ENCODE measurements at regions of chr7 and their contacts with region 1.

Region 1: DNA sequence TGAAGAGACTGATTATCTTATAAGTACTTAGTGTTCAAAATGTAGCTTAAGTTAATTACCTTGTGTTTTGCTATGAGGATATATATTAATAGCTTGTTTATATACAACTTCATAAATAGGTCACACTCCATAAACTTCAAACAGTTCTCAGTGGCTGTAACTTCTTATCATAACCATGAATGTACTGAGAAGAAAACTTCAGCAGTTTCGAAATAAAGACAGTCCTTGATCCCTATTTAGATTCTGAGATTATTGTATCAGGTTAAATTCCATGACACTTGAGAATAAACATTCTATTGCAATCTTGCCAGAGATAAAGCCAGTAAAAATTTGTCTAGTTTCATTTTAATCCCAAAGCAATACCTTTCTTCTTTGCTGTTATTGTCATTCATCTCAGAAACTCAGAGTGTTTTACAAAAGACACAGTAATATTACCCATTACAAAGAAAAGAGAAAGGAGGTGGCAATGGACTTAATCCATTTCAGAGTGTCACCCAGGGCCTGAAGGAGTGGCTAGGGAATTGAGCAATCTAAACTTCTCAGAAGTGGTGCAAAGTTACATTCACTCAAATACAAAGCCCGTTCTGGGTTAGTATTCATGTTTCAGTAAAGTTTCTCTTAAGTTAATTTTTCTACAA is 403.6 kb downstream of the SEMA3D start:
- DNase-seq: peak in 2 of 4 experiments; percentile 24 to 28
- ATAC-seq: peak; percentile 52
- H3K4me3 ChIP-seq: no peak overlapping the region
- H3K27ac ChIP-seq: peak overlapping the region; percentile 43; the same call in 1 of the 3 replicates
- H3K4me1 ChIP-seq: peaks cover 13 to 17% of the 10 kb centered on the region in 2 experiments; a peak in 4 of 5 replicates
- H3K27me3 ChIP-seq: no peaks in the 10 kb centered on the region
- CTCF ChIP-seq: no peak
- EP300 ChIP-seq: no peak
- POLR2A ChIP-seq: no peak
- RAD21 ChIP-seq: no peak

Region 2: DNA sequence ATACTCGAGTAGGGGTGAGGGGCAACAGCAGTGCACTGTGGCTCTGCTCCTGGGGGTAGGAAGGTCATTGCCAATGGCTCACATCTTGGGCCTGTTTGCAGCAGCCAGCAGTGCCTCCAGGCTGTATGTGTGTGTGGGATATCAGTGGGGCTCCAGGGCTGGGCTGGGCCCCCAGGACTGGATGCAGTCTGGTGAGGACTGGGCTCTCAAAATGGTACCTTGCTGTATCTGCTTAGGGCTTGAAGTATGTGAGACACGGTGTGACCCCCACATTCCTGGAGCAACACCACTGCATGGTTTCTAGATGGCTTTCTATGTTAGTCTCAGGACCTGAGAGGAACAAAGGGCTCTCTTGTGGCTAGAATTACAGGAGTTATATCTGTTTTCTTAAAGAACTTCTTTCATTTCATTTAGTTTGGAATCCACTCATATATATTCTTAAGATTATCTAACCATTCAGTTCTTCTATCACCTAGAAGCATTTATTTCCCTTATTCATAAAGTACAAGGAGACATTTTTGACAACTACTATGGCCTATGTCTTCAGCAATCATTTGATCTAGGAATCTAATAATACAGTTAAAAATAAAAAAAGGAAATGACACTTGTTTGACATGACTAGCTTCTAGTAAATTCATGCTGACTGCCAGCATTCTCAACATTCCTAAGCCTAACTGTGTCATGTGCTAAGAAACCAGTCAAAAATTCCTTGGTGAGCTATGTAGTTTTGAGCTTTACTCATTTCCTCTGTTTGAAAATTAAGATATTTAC is 145.5 kb before region 1 on chr7:
- CTCF ChIA-PET with region 1: no interaction called
- POLR2A ChIA-PET with region 1: no interaction called
- in situ Hi-C with region 1: no loop called
- intact Hi-C with region 1: no loop called
- DNase-seq: no peak
- ATAC-seq: no peak
- H3K4me3 ChIP-seq: no peak overlapping the region
- H3K27ac ChIP-seq: no peak overlapping the region
- H3K4me1 ChIP-seq: no peaks in the 10 kb centered on the region
- H3K27me3 ChIP-seq: no peaks in the 10 kb centered on the region
- CTCF ChIP-seq: no peak
- EP300 ChIP-seq: no peak
- POLR2A ChIP-seq: no peak
- RAD21 ChIP-seq: no peak

Region 3: DNA sequence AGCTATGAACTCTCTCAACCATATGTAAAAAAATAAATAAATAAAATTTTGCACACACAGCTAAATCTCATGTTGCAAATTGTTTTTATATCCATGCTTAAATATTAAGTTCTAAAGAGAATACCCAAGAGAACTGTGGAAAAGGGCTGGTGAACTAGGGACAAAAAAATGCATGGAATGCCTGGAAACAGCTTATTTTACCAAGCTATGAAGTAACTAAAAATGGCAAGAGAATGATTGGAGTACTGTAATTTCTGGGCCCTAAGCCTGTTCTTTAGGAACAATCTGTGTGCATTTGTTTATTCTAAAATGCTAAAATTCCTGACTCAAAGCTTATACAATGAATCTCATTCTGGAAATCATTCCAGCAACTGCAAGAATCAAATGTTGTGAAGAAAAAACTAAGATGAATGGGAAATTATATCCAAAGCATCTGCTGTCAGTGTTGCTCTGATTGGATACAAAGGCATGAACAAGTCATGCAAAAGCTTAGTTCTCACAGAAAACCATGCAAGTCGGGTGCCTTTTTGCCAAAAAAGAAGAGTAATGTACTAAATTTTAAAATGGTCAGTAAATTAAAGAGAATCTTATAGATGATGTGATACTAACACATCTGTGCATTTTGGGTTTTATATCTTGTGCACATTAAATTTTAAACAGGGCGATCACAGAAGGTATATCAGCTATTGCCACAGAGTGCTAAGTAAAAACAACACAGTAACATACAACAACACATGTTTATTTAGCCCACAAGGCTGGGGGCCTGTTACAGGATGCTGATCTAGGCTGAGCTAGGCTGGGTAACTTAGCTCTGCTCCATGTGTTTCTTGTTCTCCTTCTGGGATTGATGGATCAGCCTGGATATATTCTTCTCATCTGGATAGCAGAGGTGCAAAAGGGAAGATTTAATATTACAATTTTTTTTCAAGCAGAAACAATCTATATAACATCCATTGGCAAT is 135.2 kb before region 1 on chr7:
- CTCF ChIA-PET with region 1: no interaction called
- POLR2A ChIA-PET with region 1: no interaction called
- in situ Hi-C with region 1: no loop called
- intact Hi-C with region 1: no loop called
- DNase-seq: no peak
- ATAC-seq: no peak
- H3K4me3 ChIP-seq: no peak overlapping the region
- H3K27ac ChIP-seq: no peak overlapping the region
- H3K4me1 ChIP-seq: no peaks in the 10 kb centered on the region
- H3K27me3 ChIP-seq: no peaks in the 10 kb centered on the region
- CTCF ChIP-seq: no peak
- EP300 ChIP-seq: no peak
- POLR2A ChIP-seq: no peak
- RAD21 ChIP-seq: no peak

Region 4: GRCh38 chr7:84697506-84697905 is 85.8 kb before region 1 on chr7:
- CTCF ChIA-PET with region 1: no interaction called
- POLR2A ChIA-PET with region 1: no interaction called
- in situ Hi-C with region 1: no loop called
- intact Hi-C with region 1: no loop called
- DNase-seq: no peak
- ATAC-seq: no peak
- H3K4me3 ChIP-seq: no peak overlapping the region
- H3K27ac ChIP-seq: no peak overlapping the region
- H3K4me1 ChIP-seq: no peaks in the 10 kb centered on the region; a peak in 1 of 5 replicates
- H3K27me3 ChIP-seq: no peaks in the 10 kb centered on the region
- CTCF ChIP-seq: no peak
- EP300 ChIP-seq: no peak
- POLR2A ChIP-seq: no peak
- RAD21 ChIP-seq: no peak

Region 5: GRCh38 chr7:84714765-84715164 is 68.5 kb before region 1 on chr7:
- CTCF ChIA-PET with region 1: no interaction called
- POLR2A ChIA-PET with region 1: no interaction called
- in situ Hi-C with region 1: no loop called
- intact Hi-C with region 1: loop called (anchors 5 kb)
- DNase-seq: peak in 1 of 4 experiments; percentile 11
- ATAC-seq: peak; percentile 61
- H3K4me3 ChIP-seq: no peak overlapping the region
- H3K27ac ChIP-seq: no peak overlapping the region
- H3K4me1 ChIP-seq: no peaks in the 10 kb centered on the region
- H3K27me3 ChIP-seq: no peaks in the 10 kb centered on the region
- CTCF ChIP-seq: no peak
- EP300 ChIP-seq: no peak
- POLR2A ChIP-seq: no peak
- RAD21 ChIP-seq: no peak

Region 6: GRCh38 chr7:84801396-84801795 is 18.1 kb after region 1 on chr7:
- CTCF ChIA-PET with region 1: no interaction called
- POLR2A ChIA-PET with region 1: no interaction called
- in situ Hi-C with region 1: no loop called
- intact Hi-C with region 1: no loop called
- DNase-seq: no peak
- ATAC-seq: no peak
- H3K4me3 ChIP-seq: no peak overlapping the region
- H3K27ac ChIP-seq: no peak overlapping the region
- H3K4me1 ChIP-seq: no peaks in the 10 kb centered on the region
- H3K27me3 ChIP-seq: no peaks in the 10 kb centered on the region
- CTCF ChIP-seq: no peak
- EP300 ChIP-seq: no peak
- POLR2A ChIP-seq: no peak
- RAD21 ChIP-seq: no peak